ENCODE measurements at regions of chr13 and their contacts with region 1.

Region 1: GRCh38 chr13:38530492-38530891 is 156.4 kb upstream of the FREM2 start:
- DNase-seq: peak; percentile 13
- H3K27ac ChIP-seq: no peak overlapping the region
- CTCF ChIP-seq: peak; percentile 28

Region 2: DNA sequence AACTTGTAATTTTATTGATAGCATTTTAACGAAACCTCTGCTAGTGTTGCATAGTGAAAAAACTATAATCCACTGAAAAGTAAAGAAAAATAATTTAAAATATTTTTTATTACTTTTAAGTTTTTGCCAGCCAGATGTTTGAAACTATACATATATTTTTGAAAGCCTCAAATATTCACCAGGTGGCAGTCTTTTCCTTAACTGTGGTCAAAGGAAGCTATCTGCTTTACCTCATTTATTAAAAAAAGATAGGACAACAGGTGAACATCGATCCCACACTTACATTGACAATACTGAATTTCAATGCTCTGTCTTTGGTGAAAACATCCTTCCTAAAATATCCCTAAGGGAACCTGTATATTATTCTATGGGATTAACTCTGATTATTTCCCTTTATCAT is 761.4 kb before region 1 on chr13:
- CTCF ChIA-PET with region 1: interaction called, 10 read pairs
- POLR2A ChIA-PET with region 1: no interaction called
- DNase-seq: peak; percentile 13
- H3K27ac ChIP-seq: no peak overlapping the region
- CTCF ChIP-seq: no peak; the same call in 1 of the 2 replicates

Measured in RWPE1 (cell line).